CD8-positive, alpha-beta T cell (primary cell): ENCODE measurements at regions of chr4 and their contacts with region 1.

Region 1: GRCh38 chr4:189285377-189285776 is 655.3 kb upstream of the FRG1 start:
- DNase-seq: no peak
- ATAC-seq: no peak
- H3K4me3 ChIP-seq: no peak overlapping the region
- H3K4me3 Mint-ChIP-seq: no peak overlapping the region
- H3K27ac ChIP-seq: no peak overlapping the region
- H3K27ac Mint-ChIP-seq: no peak overlapping the region
- H3K4me1 ChIP-seq: no peaks in the 10 kb centered on the region
- H3K4me1 Mint-ChIP-seq: no peaks in the 10 kb centered on the region
- H3K27me3 ChIP-seq: no peaks in the 10 kb centered on the region
- H3K27me3 Mint-ChIP-seq: no peaks in the 10 kb centered on the region
- CTCF ChIP-seq: no peak

Region 2: GRCh38 chr4:188221090-188221489 is 1064.3 kb before region 1 on chr4:
- CTCF ChIA-PET with region 1: no interaction called
- POLR2A ChIA-PET with region 1: no interaction called
- intact Hi-C with region 1: loop called in 1 of 2 experiments (anchors 10 kb)
- DNase-seq: no peak
- ATAC-seq: no peak
- H3K4me3 ChIP-seq: no peak overlapping the region
- H3K4me3 Mint-ChIP-seq: no peak overlapping the region
- H3K27ac ChIP-seq: no peak overlapping the region
- H3K27ac Mint-ChIP-seq: no peak overlapping the region
- H3K4me1 ChIP-seq: no peaks in the 10 kb centered on the region
- H3K4me1 Mint-ChIP-seq: no peaks in the 10 kb centered on the region
- H3K27me3 ChIP-seq: no peaks in the 10 kb centered on the region
- H3K27me3 Mint-ChIP-seq: no peaks in the 10 kb centered on the region
- CTCF ChIP-seq: no peak

Region 3: DNA sequence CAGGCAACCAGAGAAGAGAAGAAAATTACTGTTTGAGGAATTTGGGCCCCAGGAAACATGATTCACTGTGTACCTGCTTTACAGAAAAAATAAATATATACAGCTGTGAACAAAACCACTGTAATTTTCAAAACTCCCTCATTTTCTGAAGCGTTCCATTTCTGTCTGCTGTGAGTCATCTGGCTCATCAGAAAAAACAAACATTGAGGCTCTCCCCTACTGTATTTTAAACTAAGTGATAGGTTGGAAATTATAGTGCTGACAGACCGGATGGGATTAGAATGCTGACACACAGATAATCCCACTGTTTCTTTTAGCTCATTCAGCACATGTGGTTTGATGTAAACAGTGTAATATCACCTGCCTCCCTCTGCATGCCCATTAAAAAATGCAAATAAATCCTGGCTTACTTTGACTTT is 299.1 kb before region 1 on chr4:
- CTCF ChIA-PET with region 1: no interaction called
- POLR2A ChIA-PET with region 1: no interaction called
- intact Hi-C with region 1: no loop called
- DNase-seq: no peak
- ATAC-seq: no peak
- H3K4me3 ChIP-seq: no peak overlapping the region
- H3K4me3 Mint-ChIP-seq: no peak overlapping the region
- H3K27ac ChIP-seq: no peak overlapping the region
- H3K27ac Mint-ChIP-seq: no peak overlapping the region
- H3K4me1 ChIP-seq: no peaks in the 10 kb centered on the region
- H3K4me1 Mint-ChIP-seq: no peaks in the 10 kb centered on the region
- H3K27me3 ChIP-seq: no peaks in the 10 kb centered on the region
- H3K27me3 Mint-ChIP-seq: no peaks in the 10 kb centered on the region
- CTCF ChIP-seq: no peak